Activated CD8-positive, alpha-beta T cell treated with anti-CD3 and anti-CD28 coated beads for 36 hours (primary cell): ENCODE measurements at regions of chr17 and their contacts with region 1.

Region 1: GRCh38 chr17:76737082-76737675 is at the start of gene SRSF2:
- DNase-seq: peak; percentile 98
- ATAC-seq: peak; percentile 81
- H3K4me3 Mint-ChIP-seq: peak within 1 kb of the TSS; percentile 86
- H3K27ac Mint-ChIP-seq: peak within 1 kb of the TSS; percentile 99
- H3K4me1 Mint-ChIP-seq: peaks cover 34% of the 10 kb centered on the region
- H3K27me3 Mint-ChIP-seq: no peaks in the 10 kb centered on the region
- CTCF ChIP-seq: no peak
- total RNA-seq, gene SRSF2: 344 to 364 TPM

Region 2: DNA sequence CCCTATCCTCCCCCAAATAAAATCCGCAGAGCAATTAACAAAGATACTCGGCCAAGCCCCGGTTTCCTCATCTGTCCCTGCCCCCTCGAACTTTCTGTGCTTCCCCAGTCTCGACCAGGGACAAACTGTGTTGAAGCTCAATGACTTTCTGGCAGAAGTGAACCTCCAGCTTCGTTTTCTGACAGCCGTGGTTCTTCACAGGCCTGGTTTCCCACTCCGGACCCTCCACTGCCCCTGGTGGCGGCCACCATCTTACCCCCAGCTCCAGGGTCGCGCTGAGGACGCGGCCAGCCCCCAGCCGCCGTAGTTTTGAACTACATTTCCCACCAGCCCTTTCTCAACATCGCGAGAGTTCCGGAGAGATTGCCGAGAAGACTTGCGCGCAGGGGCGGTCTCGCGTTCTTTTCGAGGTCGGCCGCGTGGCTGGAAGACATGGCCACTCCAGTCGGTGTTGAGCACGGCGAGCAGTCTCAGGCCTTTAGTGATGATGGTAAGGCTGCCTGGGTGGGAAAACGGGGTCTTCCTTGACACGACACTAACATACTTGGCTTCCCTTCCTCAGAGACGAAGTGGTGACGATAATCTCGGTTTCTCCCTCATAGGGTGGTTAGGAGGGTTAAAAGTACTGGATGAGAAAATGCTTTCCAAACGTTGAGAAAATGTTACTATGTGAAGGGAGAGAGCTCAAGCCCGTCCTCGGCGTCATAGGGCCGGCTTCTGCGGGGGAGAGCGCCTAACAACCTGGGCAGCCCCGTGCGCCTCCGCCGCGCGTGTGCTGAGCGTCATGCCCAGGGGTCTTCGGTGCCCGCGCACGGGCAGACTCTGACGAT is 179.6 kb before region 1 on chr17:
- CTCF ChIA-PET with region 1: no interaction called
- POLR2A ChIA-PET with region 1: interaction called, 10 read pairs
- intact Hi-C with region 1: no loop called
- DNase-seq: peak; percentile 97
- ATAC-seq: peak; percentile 94
- H3K4me3 Mint-ChIP-seq: peak overlapping the region; percentile 99
- H3K27ac Mint-ChIP-seq: peak overlapping the region; percentile 98
- H3K4me1 Mint-ChIP-seq: peaks cover 46% of the 10 kb centered on the region
- H3K27me3 Mint-ChIP-seq: no peaks in the 10 kb centered on the region
- CTCF ChIP-seq: peak; percentile 60

Region 3: GRCh38 chr17:76681222-76682137 is 55.7 kb before region 1 on chr17:
- CTCF ChIA-PET with region 1: no interaction called
- POLR2A ChIA-PET with region 1: no interaction called
- intact Hi-C with region 1: no loop called
- DNase-seq: peak; percentile 87
- ATAC-seq: peak; percentile 80
- H3K4me3 Mint-ChIP-seq: no peak overlapping the region
- H3K27ac Mint-ChIP-seq: no peak overlapping the region
- H3K4me1 Mint-ChIP-seq: peaks cover 5% of the 10 kb centered on the region
- H3K27me3 Mint-ChIP-seq: no peaks in the 10 kb centered on the region
- CTCF ChIP-seq: peak; percentile 81

Region 4: GRCh38 chr17:76714822-76715495 is 22.2 kb before region 1 on chr17:
- CTCF ChIA-PET with region 1: interaction called, 31 read pairs
- POLR2A ChIA-PET with region 1: interaction called, 111 read pairs
- intact Hi-C with region 1: no loop called
- DNase-seq: peak; percentile 90
- ATAC-seq: no peak
- H3K4me3 Mint-ChIP-seq: peak overlapping the region; percentile 53
- H3K27ac Mint-ChIP-seq: peak overlapping the region; percentile 92
- H3K4me1 Mint-ChIP-seq: peaks cover 61% of the 10 kb centered on the region
- H3K27me3 Mint-ChIP-seq: no peaks in the 10 kb centered on the region
- CTCF ChIP-seq: peak; percentile 88

Region 5: GRCh38 chr17:76726231-76726775 is 10.9 kb before region 1 on chr17 and contains the start of gene JMJD6:
- CTCF ChIA-PET with region 1: interaction called, 4 read pairs
- POLR2A ChIA-PET with region 1: interaction called, 184 read pairs
- intact Hi-C with region 1: no loop called
- DNase-seq: peak; percentile 96
- ATAC-seq: peak; percentile 87
- H3K4me3 Mint-ChIP-seq: peak within 1 kb of the TSS; percentile 98
- H3K27ac Mint-ChIP-seq: peak within 1 kb of the TSS; percentile 95
- H3K4me1 Mint-ChIP-seq: peaks cover 40% of the 10 kb centered on the region
- H3K27me3 Mint-ChIP-seq: no peaks in the 10 kb centered on the region
- CTCF ChIP-seq: no peak
- total RNA-seq, gene JMJD6: 77.9 to 80.3 TPM

Region 6: GRCh38 chr17:76747716-76748363 is 10.7 kb after region 1 on chr17:
- CTCF ChIA-PET with region 1: no interaction called
- POLR2A ChIA-PET with region 1: interaction called, 38 read pairs
- intact Hi-C with region 1: no loop called
- DNase-seq: no peak
- ATAC-seq: no peak
- H3K4me3 Mint-ChIP-seq: no peak overlapping the region
- H3K27ac Mint-ChIP-seq: no peak overlapping the region
- H3K4me1 Mint-ChIP-seq: peaks cover 13% of the 10 kb centered on the region
- H3K27me3 Mint-ChIP-seq: no peaks in the 10 kb centered on the region
- CTCF ChIP-seq: no peak

Region 7: DNA sequence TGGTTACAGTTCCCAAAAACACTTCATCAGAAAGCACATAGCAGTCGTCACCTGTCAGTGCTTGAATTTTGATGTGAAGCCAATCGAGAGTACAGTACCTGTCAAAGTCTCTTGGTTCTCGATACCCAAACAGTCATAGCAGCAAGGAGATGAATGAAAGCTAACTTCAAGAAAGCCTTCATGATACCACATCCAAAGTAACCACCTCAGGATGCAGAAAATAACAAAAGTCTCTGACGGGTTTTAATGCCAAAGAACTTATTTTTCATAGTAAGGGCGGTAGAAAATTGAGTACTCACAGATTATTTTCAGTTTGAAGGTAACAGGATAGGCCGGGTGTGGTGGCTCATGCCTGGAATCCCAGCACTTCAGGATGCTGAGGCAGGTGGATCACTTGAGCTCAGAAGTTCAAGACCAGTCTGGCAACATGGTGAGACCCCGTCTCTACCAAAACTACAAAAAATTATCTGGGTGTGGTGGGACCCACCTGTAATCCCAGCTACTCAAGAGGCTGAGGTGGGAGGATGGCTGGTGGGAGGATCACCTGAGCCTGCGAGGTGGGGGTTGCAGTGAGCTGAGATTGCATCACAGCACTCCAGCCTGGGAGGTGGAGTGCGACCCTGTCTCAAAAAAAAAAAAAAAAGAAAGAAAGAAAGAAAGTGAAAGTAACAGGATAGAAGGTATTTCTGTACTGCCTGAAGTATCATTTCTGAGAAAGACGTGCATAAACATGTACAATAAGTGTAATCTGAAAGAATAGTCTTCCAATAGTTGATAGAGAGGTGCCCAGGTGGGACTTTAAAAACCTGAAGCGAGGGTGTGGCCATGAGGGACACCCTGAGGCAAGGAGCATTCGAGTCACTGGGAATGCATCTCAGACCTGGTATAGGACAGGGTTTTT is 16.1 kb after region 1 on chr17:
- CTCF ChIA-PET with region 1: no interaction called
- POLR2A ChIA-PET with region 1: interaction called, 38 read pairs
- intact Hi-C with region 1: no loop called
- DNase-seq: no peak
- ATAC-seq: peak; percentile 82
- H3K4me3 Mint-ChIP-seq: peak overlapping the region; percentile 75
- H3K27ac Mint-ChIP-seq: peak overlapping the region; percentile 90
- H3K4me1 Mint-ChIP-seq: peaks cover 18% of the 10 kb centered on the region
- H3K27me3 Mint-ChIP-seq: no peaks in the 10 kb centered on the region
- CTCF ChIP-seq: no peak